Panc1 (cell line): ENCODE measurements at regions of chr4 and their contacts with region 1.

Region 1: DNA sequence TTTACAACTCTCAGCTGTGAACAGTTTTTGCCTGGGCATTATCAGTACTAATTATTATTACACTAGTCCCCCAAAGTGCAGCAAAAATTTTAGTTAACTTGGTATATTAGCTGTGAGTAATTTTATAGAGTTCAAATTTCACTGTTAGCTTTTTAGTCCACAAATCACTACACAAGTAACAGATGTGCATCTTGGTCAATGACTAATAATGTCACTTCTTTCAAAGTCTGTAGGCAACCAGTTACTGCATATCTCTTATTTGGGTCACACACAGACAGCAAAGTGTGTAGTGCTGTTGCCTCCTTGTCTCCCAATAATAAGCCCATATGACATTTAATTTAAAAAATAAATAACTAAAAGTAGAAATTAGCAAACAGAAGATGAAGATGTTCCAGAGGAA is 159.9 kb downstream of the SCFD2 start:
- DNase-seq: no peak
- ATAC-seq: no peak
- H3K4me3 ChIP-seq: no peak overlapping the region
- H3K27ac ChIP-seq: no peak overlapping the region
- H3K4me1 ChIP-seq: no peaks in the 10 kb centered on the region
- H3K27me3 ChIP-seq: no peaks in the 10 kb centered on the region
- CTCF ChIP-seq: no peak

Region 2: GRCh38 chr4:52780206-52780605 is 425.8 kb before region 1 on chr4:
- CTCF ChIA-PET with region 1: no interaction called
- POLR2A ChIA-PET with region 1: no interaction called
- in situ Hi-C with region 1: no loop called
- intact Hi-C with region 1: no loop called
- DNase-seq: no peak
- ATAC-seq: no peak
- H3K4me3 ChIP-seq: no peak overlapping the region
- H3K27ac ChIP-seq: no peak overlapping the region
- H3K4me1 ChIP-seq: no peaks in the 10 kb centered on the region
- H3K27me3 ChIP-seq: no peaks in the 10 kb centered on the region
- CTCF ChIP-seq: no peak

Region 3: GRCh38 chr4:53444954-53445353 is 239.0 kb after region 1 on chr4:
- CTCF ChIA-PET with region 1: no interaction called
- POLR2A ChIA-PET with region 1: no interaction called
- in situ Hi-C with region 1: no loop called
- intact Hi-C with region 1: no loop called
- DNase-seq: no peak
- ATAC-seq: no peak
- H3K4me3 ChIP-seq: no peak overlapping the region
- H3K27ac ChIP-seq: no peak overlapping the region
- H3K4me1 ChIP-seq: no peaks in the 10 kb centered on the region
- H3K27me3 ChIP-seq: no peaks in the 10 kb centered on the region
- CTCF ChIP-seq: no peak

Region 4: DNA sequence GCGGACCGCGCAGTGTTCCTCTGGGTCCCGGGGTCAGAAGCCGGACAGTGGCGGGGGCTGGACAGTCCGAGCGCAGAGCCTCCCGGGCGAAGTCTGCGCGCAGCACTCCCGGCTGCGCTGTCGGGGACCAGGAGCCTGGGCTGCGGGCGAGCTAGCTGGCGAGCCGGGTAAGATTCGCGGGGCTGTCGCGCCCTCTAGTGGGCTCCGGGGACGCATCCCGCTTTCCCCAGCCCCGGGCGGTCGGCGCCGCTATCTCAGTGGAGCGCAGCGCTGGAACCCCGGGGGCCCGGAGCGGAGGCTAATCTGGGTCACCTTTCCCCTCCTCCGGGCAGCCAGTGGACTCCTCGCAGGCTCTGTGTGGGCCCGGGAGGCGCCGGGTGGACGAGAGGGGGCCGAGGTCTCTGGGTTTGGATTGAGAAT is 1027.3 kb after region 1 on chr4:
- CTCF ChIA-PET with region 1: no interaction called
- POLR2A ChIA-PET with region 1: no interaction called
- in situ Hi-C with region 1: no loop called
- intact Hi-C with region 1: loop called (anchors 10 kb)
- DNase-seq: peak; percentile 35
- ATAC-seq: peak; percentile 88
- H3K4me3 ChIP-seq: peak overlapping the region; percentile 36 to 53
- H3K27ac ChIP-seq: no peak overlapping the region
- H3K4me1 ChIP-seq: no peaks in the 10 kb centered on the region
- H3K27me3 ChIP-seq: peaks cover 11% of the 10 kb centered on the region; the same call in 1 of the 2 replicates
- CTCF ChIP-seq: peak; percentile 78